Panc1 (cell line): ENCODE measurements at regions of chr7 and their contacts with region 1.

Region 1: GRCh38 chr7:83011954-83012353 is 150.7 kb downstream of the PCLO start:
- DNase-seq: no peak
- ATAC-seq: no peak
- H3K4me3 ChIP-seq: no peak overlapping the region
- H3K27ac ChIP-seq: no peak overlapping the region
- H3K4me1 ChIP-seq: no peaks in the 10 kb centered on the region
- H3K27me3 ChIP-seq: no peaks in the 10 kb centered on the region
- CTCF ChIP-seq: no peak

Region 2: GRCh38 chr7:83629117-83629880 is 617.3 kb after region 1 on chr7:
- CTCF ChIA-PET with region 1: interaction called, 10 read pairs
- POLR2A ChIA-PET with region 1: no interaction called
- in situ Hi-C with region 1: no loop called
- intact Hi-C with region 1: no loop called
- DNase-seq: no peak
- ATAC-seq: no peak
- H3K4me3 ChIP-seq: no peak overlapping the region
- H3K27ac ChIP-seq: no peak overlapping the region
- H3K4me1 ChIP-seq: no peaks in the 10 kb centered on the region
- H3K27me3 ChIP-seq: no peaks in the 10 kb centered on the region
- CTCF ChIP-seq: no peak